ENCODE measurements at regions of chr2 and their contacts with region 1.

Region 1: DNA sequence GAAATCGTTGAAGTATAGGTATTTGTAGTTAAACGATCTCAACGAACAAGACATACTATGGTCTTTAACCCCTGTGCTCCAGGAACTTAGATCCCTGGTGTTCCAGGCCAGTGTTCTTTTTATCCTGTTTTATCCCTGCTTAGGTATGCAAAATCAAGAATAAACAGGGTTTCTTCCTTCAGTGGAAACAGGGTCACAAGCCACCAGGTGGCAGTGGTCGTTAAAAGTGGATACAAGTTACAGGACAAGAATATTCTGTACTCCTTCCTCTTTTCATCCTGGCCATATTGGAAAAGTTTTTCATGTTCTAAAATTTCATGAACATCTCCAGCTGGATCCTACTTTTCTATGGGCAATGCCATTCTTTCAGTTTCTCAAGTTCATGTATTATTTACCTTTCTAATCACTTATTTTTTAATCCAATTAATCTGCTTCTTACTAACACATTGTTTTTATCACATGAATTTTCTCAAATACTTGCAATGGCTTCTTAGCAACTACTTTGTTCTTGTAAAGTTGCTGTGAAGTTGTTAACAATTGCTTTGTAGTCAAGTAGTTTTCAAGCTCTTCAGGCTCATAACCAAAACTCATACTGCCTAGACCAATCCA is 16.4 kb upstream of the HNMT start:
- DNase-seq: peak; percentile 73
- H3K4me3 ChIP-seq: no peak overlapping the region
- H3K27ac ChIP-seq: peak overlapping the region; percentile 46 to 74 (median 70)
- H3K4me1 ChIP-seq: peaks cover 0 to 34% (median 6%) of the 10 kb centered on the region in 4 donors
- H3K27me3 ChIP-seq: no peaks in the 10 kb centered on the region
- CTCF ChIP-seq: peak; percentile 41 to 69 (median 58)
- EP300 ChIP-seq: no peak
- POLR2A ChIP-seq: no peak

Region 2: DNA sequence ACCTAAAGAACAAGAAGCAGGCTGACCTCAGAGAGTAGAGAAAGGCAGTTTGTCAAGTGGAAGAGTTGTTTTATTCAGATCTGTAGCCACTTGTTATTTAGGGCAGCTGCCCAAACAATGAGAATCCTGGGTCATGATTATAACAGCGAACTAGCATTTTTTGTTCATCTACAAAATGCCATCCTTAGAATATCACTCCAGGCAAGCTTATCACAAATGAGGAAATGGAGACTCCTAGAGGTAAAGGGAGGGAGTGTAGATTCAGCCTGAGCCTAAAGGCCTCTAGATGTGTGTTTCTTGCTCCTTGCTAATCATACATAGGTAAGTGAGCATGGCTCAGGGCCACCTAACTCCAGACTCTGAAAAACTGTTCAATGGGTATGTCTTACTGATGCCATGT is 142.5 kb after region 1 on chr2:
- in situ Hi-C with region 1: loop called in 1 of 4 experiments (anchors 25 kb)
- intact Hi-C with region 1: no loop called
- DNase-seq: no peak
- H3K4me3 ChIP-seq: no peak overlapping the region
- H3K27ac ChIP-seq: no peak overlapping the region
- H3K4me1 ChIP-seq: peaks cover 0 to 18% (median 10%) of the 10 kb centered on the region in 4 donors
- H3K27me3 ChIP-seq: no peaks in the 10 kb centered on the region
- CTCF ChIP-seq: peak; percentile 49 to 60 (median 59)
- EP300 ChIP-seq: no peak
- POLR2A ChIP-seq: no peak

Region 3: GRCh38 chr2:138395565-138396306 is 447.9 kb after region 1 on chr2:
- in situ Hi-C with region 1: loop called in 1 of 4 experiments (anchors 25 kb)
- intact Hi-C with region 1: no loop called
- DNase-seq: no peak
- H3K4me3 ChIP-seq: no peak overlapping the region
- H3K27ac ChIP-seq: no peak overlapping the region
- H3K4me1 ChIP-seq: no peaks in the 10 kb centered on the region
- H3K27me3 ChIP-seq: no peaks in the 10 kb centered on the region
- CTCF ChIP-seq: no peak
- EP300 ChIP-seq: no peak
- POLR2A ChIP-seq: no peak

Measured in transverse colon (tissue), 4 donors.